ENCODE measurements at regions of chr3 and their contacts with region 1.

Region 1: GRCh38 chr3:152416808-152417580 is 148.3 kb downstream of the MBNL1 start:
- DNase-seq: no peak

Region 2: DNA sequence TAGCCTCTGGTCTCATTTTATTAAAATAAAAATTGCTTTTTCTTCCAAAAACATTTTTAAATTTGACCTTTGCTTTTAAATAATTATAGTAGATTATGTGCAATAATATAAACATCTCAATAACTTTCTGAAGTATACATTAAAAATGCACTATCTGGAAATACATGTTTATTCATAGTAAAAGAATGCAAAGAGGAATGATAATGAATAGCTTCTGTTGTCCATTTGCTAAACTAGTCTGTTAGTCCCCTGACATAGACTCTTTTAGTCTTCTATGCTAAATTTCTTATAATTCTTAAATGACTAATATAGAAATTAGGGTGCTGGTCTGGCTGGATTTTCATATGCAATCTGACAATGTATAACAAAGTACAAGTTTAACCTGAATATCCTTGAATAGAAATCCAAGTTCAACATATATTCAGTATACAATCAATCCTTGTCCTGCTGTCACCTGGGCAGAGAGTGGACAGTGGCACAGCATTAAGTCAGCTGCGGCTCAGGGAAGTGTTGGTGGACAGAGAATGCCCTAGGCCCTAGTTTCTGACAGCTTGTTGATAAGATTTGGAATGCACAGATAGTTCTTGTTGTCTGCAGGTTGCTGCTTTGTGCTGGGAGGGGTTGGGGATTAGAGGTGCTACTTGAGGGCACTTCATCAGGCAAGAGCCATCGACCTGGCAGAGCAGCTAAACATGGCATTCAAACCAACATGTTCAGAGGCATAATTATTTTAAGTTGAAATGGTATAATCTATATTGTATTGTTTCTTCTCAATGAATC is 13.4 kb after region 1 on chr3:
- intact Hi-C with region 1: loop called (anchors 2 kb)
- DNase-seq: no peak